Endothelial cell of umbilical vein (primary cell): ENCODE measurements at regions of chr21 and their contacts with region 1.

Region 1: DNA sequence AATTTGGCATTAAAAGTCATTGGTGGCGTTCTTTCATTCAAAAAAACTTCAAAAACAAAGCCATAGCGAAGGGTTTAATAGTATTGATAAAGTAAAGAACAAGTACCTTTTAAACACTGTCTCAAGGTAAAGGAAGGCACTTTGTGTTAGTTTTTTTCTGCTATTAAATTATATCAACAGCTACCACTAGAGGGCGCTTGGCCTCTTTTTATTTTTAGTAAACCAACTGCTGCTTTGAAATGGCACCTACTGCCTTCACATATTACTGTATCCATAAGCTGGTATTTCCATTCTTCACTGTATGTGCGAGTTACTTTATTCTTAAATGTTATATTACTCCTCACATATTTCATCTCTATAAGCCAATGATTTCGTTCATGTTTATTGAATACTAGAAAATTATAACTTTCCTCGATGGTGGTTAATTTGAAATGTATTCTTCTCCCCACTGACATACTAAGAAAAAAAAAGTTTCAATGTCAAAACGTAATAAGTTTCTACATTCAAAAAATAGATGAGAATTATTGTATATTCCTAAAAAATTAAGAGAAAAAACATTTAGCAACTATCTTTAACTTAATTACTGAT is 125.7 kb upstream of the CXADR start:
- DNase-seq: peak; percentile 67
- H3K4me3 ChIP-seq: no peak overlapping the region
- H3K27ac ChIP-seq: no peak overlapping the region
- H3K4me1 ChIP-seq: no peaks in the 10 kb centered on the region
- H3K27me3 ChIP-seq: peaks cover 0 to 12% of the 10 kb centered on the region in 2 experiments
- CTCF ChIP-seq: peak; percentile 23 to 54
- POLR2A ChIP-seq: no peak

Region 2: DNA sequence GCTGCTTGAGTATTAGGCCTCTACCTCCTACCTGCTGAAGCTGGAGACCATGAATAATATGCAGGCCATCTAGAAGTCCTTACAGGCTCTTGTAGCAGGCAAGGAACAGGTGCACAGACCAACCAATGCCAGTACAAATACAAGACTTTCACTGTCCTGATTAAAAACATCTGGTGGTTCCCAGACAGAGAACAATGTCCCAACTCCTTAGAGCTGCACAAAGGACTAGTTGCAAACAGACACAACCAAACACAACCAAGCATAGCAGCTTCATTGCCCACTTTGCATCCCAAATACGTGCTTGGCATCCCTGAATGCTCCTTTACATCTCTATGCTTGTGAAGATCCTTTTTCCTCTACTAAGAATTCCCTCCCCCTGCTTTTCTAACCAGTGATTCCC is 27.6 kb after region 1 on chr21:
- CTCF ChIA-PET with region 1: interaction called, 18 read pairs
- POLR2A ChIA-PET with region 1: no interaction called
- dilution Hi-C with region 1: no loop called
- intact Hi-C with region 1: no loop called
- DNase-seq: no peak
- H3K4me3 ChIP-seq: no peak overlapping the region
- H3K27ac ChIP-seq: no peak overlapping the region
- H3K4me1 ChIP-seq: peaks cover 4% of the 10 kb centered on the region
- H3K27me3 ChIP-seq: peaks cover 3 to 7% of the 10 kb centered on the region in 2 experiments
- CTCF ChIP-seq: no peak
- POLR2A ChIP-seq: no peak

Region 3: GRCh38 chr21:17491716-17492414 is 104.7 kb after region 1 on chr21:
- CTCF ChIA-PET with region 1: interaction called, 10 read pairs
- POLR2A ChIA-PET with region 1: no interaction called
- dilution Hi-C with region 1: no loop called
- intact Hi-C with region 1: no loop called
- DNase-seq: peak; percentile 89
- H3K4me3 ChIP-seq: no peak overlapping the region
- H3K27ac ChIP-seq: peak overlapping the region; percentile 72
- H3K4me1 ChIP-seq: peaks cover 45% of the 10 kb centered on the region
- H3K27me3 ChIP-seq: no peaks in the 10 kb centered on the region
- CTCF ChIP-seq: no peak
- POLR2A ChIP-seq: no peak

Region 4: GRCh38 chr21:17532292-17532691 is 145.2 kb after region 1 on chr21:
- CTCF ChIA-PET with region 1: interaction called, 18 read pairs
- POLR2A ChIA-PET with region 1: no interaction called
- dilution Hi-C with region 1: no loop called
- intact Hi-C with region 1: no loop called
- DNase-seq: no peak
- H3K4me3 ChIP-seq: no peak overlapping the region
- H3K27ac ChIP-seq: no peak overlapping the region
- H3K4me1 ChIP-seq: peaks cover 25% of the 10 kb centered on the region
- H3K27me3 ChIP-seq: no peaks in the 10 kb centered on the region
- CTCF ChIP-seq: no peak
- POLR2A ChIP-seq: no peak

Region 5: DNA sequence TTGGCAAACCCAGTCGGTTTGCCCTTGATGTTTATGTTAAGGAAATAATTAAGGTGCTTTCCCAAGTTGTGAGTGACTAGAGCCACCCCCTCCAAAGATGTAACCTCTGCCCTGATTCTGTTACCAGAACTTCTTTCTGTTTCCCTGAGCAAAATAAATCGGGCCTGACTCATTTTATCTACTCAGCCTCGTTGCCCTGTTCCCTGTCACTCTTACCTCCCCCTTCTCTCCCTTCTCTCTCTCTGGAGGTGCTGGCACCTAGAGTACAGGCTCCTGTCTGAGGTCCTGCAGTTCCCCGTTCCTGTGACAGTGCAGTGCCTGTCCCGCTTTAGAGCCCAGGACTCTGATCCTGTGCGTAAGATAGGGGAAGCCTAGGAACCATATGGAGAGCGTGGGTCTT is 161.1 kb after region 1 on chr21:
- CTCF ChIA-PET with region 1: interaction called, 49 read pairs
- POLR2A ChIA-PET with region 1: no interaction called
- dilution Hi-C with region 1: no loop called
- intact Hi-C with region 1: no loop called
- DNase-seq: no peak
- H3K4me3 ChIP-seq: no peak overlapping the region
- H3K27ac ChIP-seq: no peak overlapping the region
- H3K4me1 ChIP-seq: no peaks in the 10 kb centered on the region
- H3K27me3 ChIP-seq: no peaks in the 10 kb centered on the region
- CTCF ChIP-seq: no peak
- POLR2A ChIP-seq: no peak

Region 6: GRCh38 chr21:17585875-17586450 is 198.8 kb after region 1 on chr21:
- CTCF ChIA-PET with region 1: interaction called, 441 read pairs
- POLR2A ChIA-PET with region 1: interaction called, 6 read pairs
- dilution Hi-C with region 1: no loop called
- intact Hi-C with region 1: loop called (anchors 1 kb)
- DNase-seq: peak; percentile 56
- H3K4me3 ChIP-seq: no peak overlapping the region
- H3K27ac ChIP-seq: no peak overlapping the region
- H3K4me1 ChIP-seq: no peaks in the 10 kb centered on the region
- H3K27me3 ChIP-seq: peaks cover 0 to 2% of the 10 kb centered on the region in 2 experiments
- CTCF ChIP-seq: peak; percentile 37 to 51
- POLR2A ChIP-seq: no peak

Region 7: GRCh38 chr21:17650292-17650691 is 263.2 kb after region 1 on chr21:
- CTCF ChIA-PET with region 1: no interaction called
- POLR2A ChIA-PET with region 1: no interaction called
- dilution Hi-C with region 1: no loop called
- intact Hi-C with region 1: no loop called
- DNase-seq: no peak
- H3K4me3 ChIP-seq: no peak overlapping the region
- H3K27ac ChIP-seq: no peak overlapping the region
- H3K4me1 ChIP-seq: no peaks in the 10 kb centered on the region
- H3K27me3 ChIP-seq: no peaks in the 10 kb centered on the region
- CTCF ChIP-seq: no peak
- POLR2A ChIP-seq: no peak

Region 8: DNA sequence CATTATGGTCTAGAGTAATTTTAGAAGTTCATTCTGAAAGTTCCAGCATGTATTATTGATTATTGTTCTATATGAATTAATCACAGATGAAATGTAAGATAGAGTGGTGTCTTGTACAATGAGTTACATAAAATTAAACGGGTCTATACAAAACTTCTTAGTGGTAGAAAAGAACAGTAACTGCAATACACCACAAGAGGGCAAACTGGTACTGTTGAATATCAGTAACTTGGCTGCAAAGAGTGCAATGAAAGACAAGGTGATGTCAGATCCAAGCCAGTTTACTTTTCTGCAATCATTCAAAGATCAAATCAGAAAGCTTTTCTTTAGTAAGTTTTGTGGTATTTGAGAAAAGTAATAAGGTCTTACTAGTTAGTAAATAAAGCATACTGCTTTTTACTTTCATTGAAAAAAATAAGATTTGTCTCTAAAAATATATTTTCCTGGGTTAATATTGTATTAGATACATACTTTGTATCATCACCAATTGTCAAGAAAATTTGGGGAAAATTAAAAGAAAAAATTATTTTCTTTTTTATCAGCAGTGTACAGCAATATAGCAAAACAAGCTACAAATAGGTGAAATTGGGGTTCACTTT is 292.0 kb after region 1 on chr21:
- CTCF ChIA-PET with region 1: interaction called, 5 read pairs
- POLR2A ChIA-PET with region 1: no interaction called
- dilution Hi-C with region 1: no loop called
- intact Hi-C with region 1: loop called (anchors 10 kb)
- DNase-seq: peak; percentile 61
- H3K4me3 ChIP-seq: no peak overlapping the region
- H3K27ac ChIP-seq: no peak overlapping the region
- H3K4me1 ChIP-seq: no peaks in the 10 kb centered on the region
- H3K27me3 ChIP-seq: no peaks in the 10 kb centered on the region
- CTCF ChIP-seq: peak; percentile 55 to 57
- POLR2A ChIP-seq: no peak